Transverse colon (tissue), 4 donors: ENCODE measurements at regions of chr9 and their contacts with region 1.

Region 1: GRCh38 chr9:19085295-19085694 is 17.4 kb downstream of the HAUS6 start:
- DNase-seq: no peak
- H3K4me3 ChIP-seq: no peak overlapping the region
- H3K27ac ChIP-seq: no peak overlapping the region
- H3K4me1 ChIP-seq: no peaks in the 10 kb centered on the region
- H3K27me3 ChIP-seq: no peaks in the 10 kb centered on the region
- CTCF ChIP-seq: peak; percentile 18 to 48 (median 39)
- EP300 ChIP-seq: no peak
- POLR2A ChIP-seq: no peak

Region 2: DNA sequence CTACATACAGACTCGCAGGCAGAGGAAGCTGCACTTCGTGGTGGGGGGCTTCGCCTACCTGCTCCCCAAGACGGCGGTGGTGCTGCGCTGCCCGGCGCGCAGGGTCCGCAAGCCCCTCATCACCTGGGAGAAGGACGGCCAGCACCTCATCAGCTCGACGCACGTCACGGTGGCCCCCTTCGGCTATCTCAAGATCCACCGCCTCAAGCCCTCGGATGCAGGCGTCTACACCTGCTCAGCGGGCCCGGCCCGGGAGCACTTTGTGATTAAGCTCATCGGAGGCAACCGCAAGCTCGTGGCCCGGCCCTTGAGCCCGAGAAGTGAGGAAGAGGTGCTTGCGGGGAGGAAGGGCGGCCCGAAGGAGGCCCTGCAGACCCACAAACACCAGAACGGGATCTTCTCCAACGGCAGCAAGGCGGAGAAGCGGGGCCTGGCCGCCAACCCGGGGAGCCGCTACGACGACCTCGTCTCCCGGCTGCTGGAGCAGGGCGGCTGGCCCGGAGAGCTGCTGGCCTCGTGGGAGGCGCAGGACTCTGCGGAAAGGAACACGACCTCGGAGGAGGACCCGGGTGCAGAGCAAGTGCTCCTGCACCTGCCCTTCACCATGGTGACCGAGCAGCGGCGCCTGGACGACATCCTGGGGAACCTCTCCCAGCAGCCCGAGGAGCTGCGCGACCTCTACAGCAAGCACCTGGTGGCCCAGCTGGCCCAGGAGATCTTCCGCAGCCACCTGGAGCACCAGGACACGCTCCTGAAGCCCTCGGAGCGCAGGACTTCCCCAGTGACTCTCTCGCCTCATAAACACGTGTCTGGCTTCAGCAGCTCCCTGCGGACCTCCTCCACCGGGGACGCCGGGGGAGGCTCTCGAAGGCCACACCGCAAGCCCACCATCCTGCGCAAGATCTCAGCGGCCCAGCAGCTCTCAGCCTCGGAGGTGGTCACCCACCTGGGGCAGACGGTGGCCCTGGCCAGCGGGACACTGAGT is 308.2 kb before region 1 on chr9:
- in situ Hi-C with region 1: no loop called
- intact Hi-C with region 1: no loop called
- DNase-seq: no peak
- H3K4me3 ChIP-seq: no peak overlapping the region
- H3K27ac ChIP-seq: no peak overlapping the region
- H3K4me1 ChIP-seq: peaks cover 0 to 9% (median 0%) of the 10 kb centered on the region in 4 donors
- H3K27me3 ChIP-seq: no peaks in the 10 kb centered on the region
- CTCF ChIP-seq: no peak
- EP300 ChIP-seq: no peak
- POLR2A ChIP-seq: no peak

Region 3: GRCh38 chr9:19456996-19457692 is 371.8 kb after region 1 on chr9:
- in situ Hi-C with region 1: loop called in 1 of 4 experiments (anchors 25 kb)
- intact Hi-C with region 1: no loop called
- DNase-seq: peak; percentile 75
- H3K4me3 ChIP-seq: peak overlapping the region in 1 of 4 donors; percentile 29
- H3K27ac ChIP-seq: peak overlapping the region in 2 of 4 donors; percentile 4 to 20
- H3K4me1 ChIP-seq: peaks cover 0 to 10% (median 4%) of the 10 kb centered on the region in 4 donors
- H3K27me3 ChIP-seq: no peaks in the 10 kb centered on the region
- CTCF ChIP-seq: peak; percentile 89 to 96 (median 92)
- EP300 ChIP-seq: no peak
- POLR2A ChIP-seq: no peak

Region 4: DNA sequence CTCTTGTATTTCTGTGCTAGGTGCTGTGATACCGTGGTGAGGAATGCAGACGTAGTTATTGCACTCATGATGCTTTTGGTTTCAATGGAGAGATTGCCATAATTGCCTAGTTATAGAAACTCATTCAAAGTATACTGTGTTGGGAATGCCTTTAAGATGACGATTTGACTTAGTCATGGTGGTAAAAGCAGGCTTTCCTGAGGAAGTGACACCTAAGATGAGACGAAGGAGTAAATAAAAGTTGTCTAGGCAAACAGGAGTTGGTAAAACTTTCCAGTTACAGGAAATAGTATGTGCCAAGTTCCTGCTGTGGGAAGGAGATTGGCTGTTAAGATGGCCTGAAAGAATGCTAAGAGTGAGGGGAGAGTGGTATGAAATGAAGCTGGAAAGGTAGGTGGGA is 1646.8 kb after region 1 on chr9:
- in situ Hi-C with region 1: no loop called
- intact Hi-C with region 1: no loop called
- DNase-seq: no peak
- H3K4me3 ChIP-seq: no peak overlapping the region
- H3K27ac ChIP-seq: no peak overlapping the region
- H3K4me1 ChIP-seq: peaks cover 0 to 9% (median 0%) of the 10 kb centered on the region in 4 donors
- H3K27me3 ChIP-seq: no peaks in the 10 kb centered on the region
- CTCF ChIP-seq: no peak
- EP300 ChIP-seq: no peak
- POLR2A ChIP-seq: no peak